ENCODE measurements at regions of chr9 and their contacts with region 1.

Region 1: DNA sequence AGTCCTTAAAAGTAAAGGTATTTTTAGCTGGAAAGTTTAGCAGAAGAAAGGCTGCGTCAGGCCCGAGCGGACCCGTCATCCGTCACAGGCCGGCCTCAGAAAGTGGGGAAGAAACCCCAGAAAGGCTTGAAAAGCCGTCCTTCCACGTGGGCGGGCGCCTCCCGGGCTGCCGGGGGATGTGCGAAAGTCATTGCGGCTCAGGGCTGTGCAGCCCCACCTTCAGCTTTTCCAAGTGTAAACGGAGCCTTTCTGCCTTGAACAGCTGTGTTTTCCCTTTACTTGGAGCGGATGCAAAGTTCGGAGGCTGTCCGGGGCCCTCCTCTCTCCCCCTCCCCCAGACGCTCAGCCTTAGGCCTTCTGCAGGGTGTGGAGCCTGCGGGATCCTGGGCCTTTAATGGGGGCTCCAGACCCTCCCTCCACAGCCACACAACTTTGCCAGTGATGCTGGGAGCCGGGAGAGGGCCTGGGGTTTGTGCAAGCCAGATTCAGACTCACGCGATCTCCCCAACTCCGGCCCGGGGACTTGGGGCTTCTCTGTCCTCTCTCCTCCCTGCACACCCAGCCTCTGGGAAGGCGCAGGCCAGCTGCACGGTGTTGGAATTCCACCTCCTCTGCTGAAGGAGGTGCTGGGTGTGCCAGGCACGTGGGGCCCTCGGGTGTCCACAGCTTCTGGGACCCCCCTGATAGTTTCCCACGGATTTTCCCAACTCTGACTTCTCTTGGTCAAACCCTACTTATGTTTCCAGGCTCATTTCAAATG is 95.5 kb upstream of the RAPGEF1 start:
- H3K4me3 ChIP-seq: no peak overlapping the region
- H3K27ac ChIP-seq: no peak overlapping the region
- H3K4me1 ChIP-seq: no peaks in the 10 kb centered on the region; the same call in 1 of the 2 replicates
- CTCF ChIP-seq: no peak

Region 2: DNA sequence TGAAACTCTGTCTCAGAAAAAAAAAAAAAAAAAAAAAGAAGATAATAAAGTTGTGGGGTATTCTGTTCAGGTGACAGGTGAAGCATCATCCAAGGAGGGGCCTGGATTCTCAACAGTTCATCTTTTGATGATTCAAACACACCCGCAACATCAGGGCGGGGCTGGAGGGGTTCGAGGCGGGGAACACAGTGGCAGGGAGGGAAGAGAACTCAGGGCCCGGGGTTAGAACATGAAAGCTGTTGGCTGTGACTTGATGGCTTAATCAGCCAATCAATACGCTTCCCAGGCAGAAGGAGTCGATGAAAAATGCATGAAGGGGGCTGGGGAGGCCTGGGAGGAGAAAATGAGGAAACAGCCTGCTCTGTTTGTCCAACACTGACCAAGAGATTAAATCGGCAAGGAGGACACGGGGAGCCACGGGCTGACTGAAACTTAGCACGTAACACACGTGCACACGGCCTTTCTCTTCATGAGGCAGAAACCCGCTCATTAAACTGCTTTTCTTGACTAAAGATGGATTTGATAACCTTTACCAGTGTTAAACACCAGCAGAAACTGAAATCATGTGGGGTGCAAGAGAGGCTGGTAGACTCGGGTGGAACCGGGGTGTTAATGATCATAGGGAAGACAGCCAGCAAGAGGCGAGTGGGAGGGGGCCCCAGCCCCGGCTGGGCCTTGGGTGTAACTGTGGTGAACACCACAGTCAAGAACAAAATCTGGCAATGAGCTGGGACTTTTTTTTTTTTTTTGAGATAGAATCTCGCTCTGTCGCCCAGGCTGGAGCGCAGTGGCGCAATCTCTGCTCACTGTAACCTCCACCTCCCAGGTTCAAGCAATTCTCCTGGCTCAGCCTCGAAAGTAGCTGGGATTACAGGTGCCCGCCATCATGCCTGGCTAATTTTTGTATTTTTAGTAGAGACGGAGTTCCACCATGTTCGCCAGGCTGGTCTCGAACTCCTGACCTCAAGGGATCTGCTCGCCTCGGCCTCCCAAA is 10.3 kb after region 1 on chr9:
- CTCF ChIA-PET with region 1: no interaction called
- POLR2A ChIA-PET with region 1: interaction called, 11 read pairs
- H3K4me3 ChIP-seq: no peak overlapping the region
- H3K27ac ChIP-seq: no peak overlapping the region
- H3K4me1 ChIP-seq: no peaks in the 10 kb centered on the region
- CTCF ChIP-seq: no peak

Measured in HEK293 (cell line).